Right lobe of liver (tissue), 6 donors: ENCODE measurements at regions of chr9 and their contacts with region 1.

Region 1: DNA sequence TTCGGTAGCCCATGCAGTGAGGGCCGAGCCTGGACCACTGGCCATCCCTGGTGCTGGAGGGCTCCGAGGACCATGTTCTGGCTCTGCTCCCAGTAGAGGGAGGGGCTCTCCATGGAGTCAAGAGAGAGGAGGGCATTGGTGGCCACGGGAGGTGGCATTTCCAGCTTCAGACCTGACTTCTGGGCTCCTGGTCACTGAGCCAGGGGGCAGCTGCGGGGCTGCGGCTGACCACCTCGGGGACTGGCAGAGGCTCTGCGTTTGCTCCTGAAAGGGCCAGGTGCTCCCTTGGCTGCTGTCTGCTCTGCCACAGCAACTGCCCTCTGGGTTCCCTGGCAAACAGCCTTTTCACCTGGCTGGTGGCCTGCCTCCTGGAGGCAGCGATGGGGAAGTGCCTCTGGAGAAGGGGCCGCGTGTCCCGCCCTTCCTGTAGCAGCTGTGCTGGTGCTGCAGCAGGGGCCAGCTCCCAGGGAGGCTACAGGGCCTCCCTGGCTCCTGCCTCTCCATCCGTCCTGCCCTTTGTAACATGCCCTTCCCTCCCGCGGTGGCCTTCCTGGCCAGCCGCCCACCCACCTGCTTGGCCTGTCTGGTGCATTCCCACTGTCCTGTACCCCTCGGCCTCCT is 144.6 kb downstream of the CACNA1B start:
- DNase-seq: peak in 1 of 3 donors; percentile 47
- ATAC-seq: peak in 3 of 4 donors; percentile 22 to 51 (median 38)
- H3K4me3 ChIP-seq: no peak overlapping the region
- H3K27ac ChIP-seq: no peak overlapping the region
- H3K4me1 ChIP-seq: no peaks in the 10 kb centered on the region
- H3K27me3 ChIP-seq: peaks cover 0 to 11% of the 10 kb centered on the region in 2 donors
- CTCF ChIP-seq: peak in 3 of 4 donors; percentile 10 to 39 (median 18)
- POLR2A ChIP-seq: no peak

Region 2: GRCh38 chr9:137968235-137968634 is 54.0 kb before region 1 on chr9:
- intact Hi-C with region 1: no loop called
- DNase-seq: peak in 1 of 3 donors; percentile 27
- ATAC-seq: no peak
- H3K4me3 ChIP-seq: no peak overlapping the region
- H3K27ac ChIP-seq: no peak overlapping the region
- H3K4me1 ChIP-seq: no peaks in the 10 kb centered on the region
- H3K27me3 ChIP-seq: no peaks in the 10 kb centered on the region
- CTCF ChIP-seq: no peak
- POLR2A ChIP-seq: no peak

Region 3: GRCh38 chr9:138082918-138083636 is 60.8 kb after region 1 on chr9:
- intact Hi-C with region 1: loop called in 1 of 2 experiments (anchors 10 kb)
- DNase-seq: peak; percentile 7 to 32 (median 18)
- ATAC-seq: peak in 1 of 4 donors; percentile 26
- H3K4me3 ChIP-seq: no peak overlapping the region
- H3K27ac ChIP-seq: no peak overlapping the region
- H3K4me1 ChIP-seq: no peaks in the 10 kb centered on the region
- H3K27me3 ChIP-seq: no peaks in the 10 kb centered on the region
- CTCF ChIP-seq: no peak
- POLR2A ChIP-seq: no peak